ENCODE measurements at regions of chr11 and their contacts with region 1.

Region 1: GRCh38 chr11:15074206-15075161 is 1.1 kb downstream of the CALCB start:
- DNase-seq: peak; percentile 20
- H3K4me3 ChIP-seq: peak overlapping the region; percentile 29; the same call in 1 of the 2 replicates
- H3K27ac ChIP-seq: no peak overlapping the region
- H3K27me3 ChIP-seq: peaks cover 31% of the 10 kb centered on the region
- CTCF ChIP-seq: peak; percentile 69

Region 2: DNA sequence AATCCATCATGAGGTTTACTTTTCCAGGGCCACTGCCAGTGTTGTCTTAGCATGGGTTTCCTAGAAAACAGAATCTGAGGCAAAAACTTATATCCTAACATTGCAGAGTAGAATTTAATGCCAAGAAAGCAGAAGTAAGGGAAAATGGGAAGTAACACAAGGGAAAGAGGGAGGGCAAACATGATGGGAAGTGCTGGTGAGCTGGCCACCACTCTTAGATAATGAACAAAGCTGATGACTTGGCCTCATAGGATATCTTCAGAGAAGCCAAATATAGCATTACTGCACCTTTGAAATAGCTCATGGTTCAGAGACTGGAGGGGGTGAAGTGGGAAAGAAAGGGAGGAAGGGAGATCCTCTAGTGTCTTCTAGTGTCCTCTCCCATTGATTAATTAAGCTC is 25.9 kb before region 1 on chr11:
- CTCF ChIA-PET with region 1: no interaction called
- POLR2A ChIA-PET with region 1: no interaction called
- DNase-seq: no peak
- H3K4me3 ChIP-seq: no peak overlapping the region
- H3K27ac ChIP-seq: no peak overlapping the region
- H3K27me3 ChIP-seq: no peaks in the 10 kb centered on the region
- CTCF ChIP-seq: no peak

Region 3: DNA sequence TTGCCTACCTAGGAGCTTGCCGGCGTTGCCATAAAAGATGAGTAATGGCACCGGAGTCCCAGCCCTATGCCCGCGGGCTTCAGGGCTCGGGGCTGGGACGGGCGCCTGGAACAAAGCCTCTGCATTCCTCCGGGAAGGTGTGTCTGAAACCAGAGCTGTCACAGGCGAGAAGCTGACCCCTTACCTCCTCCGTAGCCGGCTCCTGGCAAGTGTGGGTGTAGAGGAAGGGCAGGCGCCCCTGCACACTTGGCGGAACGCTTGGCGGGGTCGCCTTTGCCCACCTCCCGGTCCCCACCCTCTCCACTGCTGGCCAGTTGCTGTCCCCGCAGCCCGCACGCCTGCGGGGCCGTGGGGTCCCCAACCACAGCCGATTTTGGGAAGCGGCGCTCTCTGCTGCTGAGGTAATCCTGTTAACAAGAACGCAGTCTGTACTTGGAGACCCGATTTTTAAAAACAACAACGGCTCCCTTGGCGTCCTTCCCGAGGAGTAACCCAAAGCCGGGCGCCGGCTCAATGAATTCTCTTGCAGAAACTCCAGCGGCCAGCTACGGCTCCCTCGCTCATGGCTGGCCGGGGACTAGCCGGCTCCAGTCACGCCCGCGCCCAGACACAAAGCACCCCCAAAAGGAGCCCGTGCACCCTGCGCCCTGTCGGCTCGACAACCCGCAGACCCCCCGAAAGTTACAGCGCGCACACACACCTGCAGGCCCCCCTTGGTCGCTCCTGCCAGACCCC is 1850.5 kb after region 1 on chr11:
- CTCF ChIA-PET with region 1: interaction called, 11 read pairs
- POLR2A ChIA-PET with region 1: no interaction called
- DNase-seq: no peak
- H3K4me3 ChIP-seq: no peak overlapping the region
- H3K27ac ChIP-seq: no peak overlapping the region
- H3K27me3 ChIP-seq: peaks cover 44% of the 10 kb centered on the region
- CTCF ChIP-seq: no peak

Measured in AG04450 (cell line).